Prostate gland (tissue), 2 donors: ENCODE measurements at regions of chr13 and their contacts with region 1.

Region 1: GRCh38 chr13:111281751-111282311 is 38.6 kb upstream of the TEX29 start:
- DNase-seq: no peak
- H3K4me3 ChIP-seq: no peak overlapping the region
- H3K27ac ChIP-seq: peak overlapping the region; percentile 83 to 89
- H3K4me1 ChIP-seq: peaks cover 27% of the 10 kb centered on the region
- H3K27me3 ChIP-seq: no peaks in the 10 kb centered on the region
- CTCF ChIP-seq: no peak
- POLR2A ChIP-seq: no peak

Region 2: DNA sequence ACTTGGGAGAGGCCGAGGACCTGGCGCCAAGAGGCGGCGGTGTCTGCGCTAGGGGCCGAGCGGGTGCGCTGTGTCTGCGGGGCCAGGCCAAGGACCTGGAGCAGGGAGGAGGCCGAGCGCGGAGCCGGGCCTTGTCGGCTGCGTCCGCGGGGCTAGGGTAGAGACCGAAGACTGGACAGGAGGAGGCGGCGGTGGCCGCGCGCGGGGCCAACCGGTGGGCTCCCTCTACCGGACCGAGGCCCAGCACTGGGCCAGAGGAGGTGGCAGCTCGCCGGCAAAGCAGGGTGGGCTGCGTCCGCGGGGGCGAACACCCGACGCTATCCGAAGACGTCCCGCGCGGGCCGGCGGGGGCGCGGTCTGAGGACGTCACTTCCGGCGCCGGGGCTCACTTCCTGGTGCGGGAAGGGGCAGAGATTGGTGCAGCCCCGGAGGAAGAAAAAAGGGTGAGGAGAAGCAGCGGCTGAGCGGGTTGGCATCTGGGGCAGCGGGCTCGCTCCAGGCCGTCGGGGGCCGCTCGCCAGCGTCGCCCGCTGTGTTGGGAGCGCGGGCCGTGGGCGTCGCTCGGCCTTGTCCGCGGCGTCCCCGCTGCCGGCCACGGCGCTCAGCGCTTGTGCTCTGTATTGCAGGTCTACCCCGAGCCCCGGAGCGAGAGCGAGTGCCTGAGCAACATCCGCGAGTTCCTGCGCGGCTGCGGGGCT is 128.4 kb before region 1 on chr13:
- intact Hi-C with region 1: loop called (anchors 5 kb)
- DNase-seq: peak; percentile 89
- H3K4me3 ChIP-seq: peak overlapping the region; percentile 73 to 99
- H3K27ac ChIP-seq: peak overlapping the region; percentile 92 to 96
- H3K4me1 ChIP-seq: peaks cover 6% of the 10 kb centered on the region
- H3K27me3 ChIP-seq: no peaks in the 10 kb centered on the region
- CTCF ChIP-seq: peak in 2 of 4 experiments; percentile 11 to 26
- POLR2A ChIP-seq: no peak

Region 3: DNA sequence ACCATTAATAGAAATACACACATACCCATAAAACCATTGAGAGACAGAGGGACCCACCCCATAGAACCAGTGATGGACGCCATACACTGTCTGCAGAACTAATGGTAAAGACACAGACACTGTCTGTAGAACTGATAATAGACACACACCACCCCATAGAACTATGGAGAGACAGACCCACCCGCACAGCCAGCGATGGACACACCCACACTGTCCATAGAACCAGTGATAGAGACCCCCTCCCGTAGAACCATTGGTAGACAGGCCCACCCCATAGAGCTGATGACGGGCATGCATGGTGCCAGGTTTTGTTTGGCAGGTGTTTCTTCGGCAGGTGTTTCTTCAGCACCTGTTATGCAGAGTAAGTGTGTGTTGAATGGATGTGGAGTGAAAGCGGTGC is 49.6 kb before region 1 on chr13:
- intact Hi-C with region 1: loop called (anchors 5 kb)
- DNase-seq: no peak
- H3K4me3 ChIP-seq: no peak overlapping the region
- H3K27ac ChIP-seq: no peak overlapping the region
- H3K4me1 ChIP-seq: no peaks in the 10 kb centered on the region
- H3K27me3 ChIP-seq: no peaks in the 10 kb centered on the region
- CTCF ChIP-seq: no peak
- POLR2A ChIP-seq: no peak

Region 4: DNA sequence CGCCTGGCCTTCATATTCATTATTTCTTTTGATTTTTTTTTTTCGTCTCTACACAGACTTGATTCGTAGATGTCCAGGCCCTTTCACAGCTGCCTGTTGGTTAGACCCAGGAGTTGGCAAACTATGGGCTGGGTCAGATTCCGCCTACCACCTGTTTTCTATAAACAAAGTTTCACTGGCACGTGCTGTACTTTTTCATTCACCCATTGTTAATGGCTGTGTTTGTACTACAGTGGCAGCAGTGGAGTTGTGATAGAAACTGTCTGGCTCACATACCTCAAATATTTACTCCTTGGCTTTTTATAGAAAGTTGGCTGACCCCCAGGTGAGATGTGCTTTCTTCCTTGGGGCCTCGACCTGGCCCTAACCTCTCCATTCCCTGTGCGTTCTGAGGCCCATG is 34.3 kb before region 1 on chr13:
- intact Hi-C with region 1: loop called (anchors 5 kb)
- DNase-seq: peak; percentile 88
- H3K4me3 ChIP-seq: no peak overlapping the region
- H3K27ac ChIP-seq: peak overlapping the region; percentile 68 to 83
- H3K4me1 ChIP-seq: peaks cover 15% of the 10 kb centered on the region
- H3K27me3 ChIP-seq: no peaks in the 10 kb centered on the region
- CTCF ChIP-seq: no peak
- POLR2A ChIP-seq: no peak